ENCODE measurements at regions of chr4 and their contacts with region 1.

Region 1: GRCh38 chr4:89029591-89029990 is 27.4 kb downstream of the FAM13A start:
- DNase-seq: no peak
- H3K4me3 ChIP-seq: no peak overlapping the region
- H3K27me3 ChIP-seq: no peaks in the 10 kb centered on the region
- CTCF ChIP-seq: no peak

Region 2: GRCh38 chr4:88818631-88819470 is 210.7 kb before region 1 on chr4:
- CTCF ChIA-PET with region 1: interaction called, 119 read pairs
- POLR2A ChIA-PET with region 1: no interaction called
- DNase-seq: no peak
- H3K4me3 ChIP-seq: no peak overlapping the region
- H3K27me3 ChIP-seq: no peaks in the 10 kb centered on the region
- CTCF ChIP-seq: peak; percentile 51

Region 3: GRCh38 chr4:89009115-89009514 is 20.5 kb before region 1 on chr4:
- CTCF ChIA-PET with region 1: no interaction called
- POLR2A ChIA-PET with region 1: no interaction called
- DNase-seq: no peak
- H3K4me3 ChIP-seq: no peak overlapping the region
- H3K27me3 ChIP-seq: no peaks in the 10 kb centered on the region
- CTCF ChIP-seq: no peak

Measured in BJ (cell line).